ENCODE measurements at regions of chr3 and their contacts with region 1.

Region 1: GRCh38 chr3:195271116-195271858 is at the start of gene XXYLT1:
- DNase-seq: peak; percentile 68 to 72 (median 69)
- H3K4me3 ChIP-seq: peak within 1 kb of the TSS; percentile 62 to 92 (median 91)
- H3K4me3 Mint-ChIP-seq: peak within 1 kb of the TSS; percentile 84 to 93
- H3K27ac ChIP-seq: peak within 1 kb of the TSS in 1 of 2 donors; percentile 68
- H3K27ac Mint-ChIP-seq: peak within 1 kb of the TSS; percentile 50 to 90 (median 83)
- H3K4me1 ChIP-seq: peaks cover 26 to 33% of the 10 kb centered on the region in 2 donors
- H3K4me1 Mint-ChIP-seq: peaks cover 24% of the 10 kb centered on the region
- H3K27me3 ChIP-seq: no peaks in the 10 kb centered on the region
- H3K27me3 Mint-ChIP-seq: peaks cover 0 to 5% (median 0%) of the 10 kb centered on the region in 3 donors
- CTCF ChIP-seq: peak; percentile 83
- polyA plus RNA-seq, gene XXYLT1: 11.8 to 13.5 (median 13.2) TPM

Region 2: DNA sequence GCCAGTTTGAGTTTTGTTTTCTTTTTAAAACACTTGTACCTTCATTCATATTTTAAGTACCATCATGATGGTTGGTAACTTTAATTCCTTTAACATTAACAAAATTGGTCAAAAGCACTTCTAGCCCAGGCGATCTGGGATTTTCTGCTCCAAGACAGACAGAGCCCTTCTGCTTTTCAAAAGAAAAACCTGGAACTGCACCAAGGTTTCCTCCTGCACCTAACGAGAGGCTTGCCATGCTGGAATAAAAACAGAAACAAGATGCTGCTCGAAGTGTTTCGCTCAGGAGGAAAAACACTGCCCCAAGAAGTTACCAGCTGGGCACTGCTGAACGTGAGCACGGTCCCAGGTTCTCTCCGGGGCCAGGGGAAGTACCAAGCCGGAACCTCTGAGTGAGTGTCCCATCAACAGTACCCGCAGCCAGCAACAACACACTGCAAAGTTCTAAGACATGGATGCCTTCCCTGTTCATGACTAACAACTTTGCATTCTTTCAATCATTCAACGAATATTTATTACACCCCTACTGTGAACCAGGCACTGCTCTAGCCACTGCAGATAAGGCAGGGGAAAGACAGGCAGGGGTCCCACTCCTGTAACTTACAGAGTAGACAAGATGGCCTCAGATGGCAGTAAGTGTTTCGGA is 99.1 kb before region 1 on chr3:
- intact Hi-C with region 1: no loop called
- DNase-seq: peak in 2 of 3 donors; percentile 27 to 47
- H3K4me3 ChIP-seq: peak overlapping the region in 1 of 3 experiments; percentile 39
- H3K4me3 Mint-ChIP-seq: peak overlapping the region; percentile 17 to 78
- H3K27ac ChIP-seq: no peak overlapping the region
- H3K27ac Mint-ChIP-seq: peak overlapping the region in 2 of 7 donors; percentile 6 to 51
- H3K4me1 ChIP-seq: peaks cover 37 to 40% of the 10 kb centered on the region in 2 donors
- H3K4me1 Mint-ChIP-seq: peaks cover 43% of the 10 kb centered on the region
- H3K27me3 ChIP-seq: no peaks in the 10 kb centered on the region
- H3K27me3 Mint-ChIP-seq: peaks cover 0 to 2% (median 1%) of the 10 kb centered on the region in 3 donors
- CTCF ChIP-seq: no peak

Region 3: DNA sequence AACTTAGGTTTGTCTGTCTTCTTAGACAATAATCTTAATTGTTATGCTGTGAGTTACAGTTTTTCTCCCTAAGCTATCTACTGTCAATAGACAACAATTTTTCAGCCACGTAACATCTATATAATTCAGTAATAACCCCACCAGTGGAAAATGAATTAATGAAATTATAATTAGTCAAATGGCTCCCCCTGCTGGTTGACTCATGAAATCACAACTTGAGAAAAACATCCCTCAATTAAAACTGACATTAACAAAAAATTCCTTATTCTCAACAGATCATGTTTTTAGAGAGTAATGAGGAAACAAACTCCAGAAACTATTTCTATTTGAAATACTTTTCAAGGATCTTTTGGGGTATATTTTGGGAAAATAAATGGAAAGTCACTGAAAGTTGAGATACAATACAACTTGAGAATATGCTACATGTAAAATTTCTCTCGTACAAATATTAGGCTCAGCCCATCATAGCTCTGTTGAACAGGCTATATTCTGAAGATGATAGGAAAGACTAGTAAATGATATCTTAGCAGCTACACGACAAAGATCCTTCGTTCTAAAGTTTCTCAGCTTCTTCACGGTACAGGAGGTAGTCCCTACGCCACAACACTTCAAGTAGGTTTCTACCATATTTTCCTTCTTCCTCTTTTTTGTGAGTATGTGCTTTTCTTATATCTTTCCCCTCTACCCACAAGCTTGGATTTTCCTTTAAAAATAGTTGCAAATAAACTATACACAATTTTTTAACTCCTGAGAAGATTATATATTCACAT is 251.2 kb after region 1 on chr3:
- intact Hi-C with region 1: loop called (anchors 5 kb)
- DNase-seq: peak in 2 of 3 donors; percentile 32 to 60
- H3K4me3 ChIP-seq: no peak overlapping the region
- H3K4me3 Mint-ChIP-seq: no peak overlapping the region
- H3K27ac ChIP-seq: no peak overlapping the region
- H3K27ac Mint-ChIP-seq: peak overlapping the region in 2 of 7 donors; percentile 13 to 31
- H3K4me1 ChIP-seq: no peaks in the 10 kb centered on the region
- H3K4me1 Mint-ChIP-seq: peaks cover 4% of the 10 kb centered on the region
- H3K27me3 ChIP-seq: no peaks in the 10 kb centered on the region
- H3K27me3 Mint-ChIP-seq: no peaks in the 10 kb centered on the region
- CTCF ChIP-seq: peak; percentile 81

Region 4: DNA sequence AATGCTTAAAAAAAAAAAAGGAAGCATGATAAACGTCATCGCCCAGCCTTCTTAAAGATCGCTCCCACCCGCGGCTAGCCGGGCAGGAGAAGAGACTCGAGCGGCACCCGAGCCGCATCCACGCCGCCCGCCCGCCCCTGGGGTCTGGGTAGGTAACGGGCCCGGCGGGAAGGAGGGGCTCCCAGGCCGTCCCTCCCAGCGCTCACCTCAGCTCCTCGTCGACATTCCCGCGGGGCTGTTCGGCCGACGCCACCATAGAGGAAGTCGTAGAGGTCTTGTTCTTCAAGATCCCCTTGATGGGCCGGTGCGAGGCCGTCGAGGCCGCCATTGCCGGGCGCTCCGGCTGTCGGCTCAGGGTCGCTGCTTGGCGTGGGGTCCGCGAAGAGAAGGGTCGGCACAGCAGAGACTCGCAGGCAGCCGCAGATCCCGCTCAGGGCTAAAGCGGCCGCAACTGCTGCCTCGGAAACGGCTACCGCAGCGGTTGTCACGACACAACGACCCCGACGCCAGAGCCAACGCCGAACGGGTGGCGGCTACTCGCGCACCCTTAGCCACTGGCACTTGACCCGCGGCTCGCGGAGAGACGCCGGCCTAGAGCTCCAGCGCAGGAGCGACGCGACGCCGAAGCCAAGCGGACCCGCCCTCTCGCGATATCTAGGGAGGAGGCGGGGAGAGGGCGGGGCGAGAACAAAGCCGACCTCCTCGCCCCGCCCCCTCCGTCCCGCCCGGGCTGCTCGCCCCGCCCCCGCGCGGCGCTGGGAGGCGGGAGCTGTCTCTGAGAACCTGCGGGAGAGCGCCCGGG is 271.6 kb after region 1 on chr3 and contains the start of gene PPP1R2:
- intact Hi-C with region 1: loop called in 1 of 2 experiments (anchors 5 kb)
- DNase-seq: peak; percentile 87 to 89 (median 88)
- H3K4me3 ChIP-seq: peak within 1 kb of the TSS; percentile 73 to 91 (median 89)
- H3K4me3 Mint-ChIP-seq: peak within 1 kb of the TSS; percentile 89 to 94
- H3K27ac ChIP-seq: peak within 1 kb of the TSS; percentile 84 to 92
- H3K27ac Mint-ChIP-seq: peak within 1 kb of the TSS; percentile 93 to 98 (median 96)
- H3K4me1 ChIP-seq: peaks cover 30 to 42% of the 10 kb centered on the region in 2 donors
- H3K4me1 Mint-ChIP-seq: peaks cover 57% of the 10 kb centered on the region
- H3K27me3 ChIP-seq: peaks cover 8 to 16% of the 10 kb centered on the region in 2 donors
- H3K27me3 Mint-ChIP-seq: peaks cover 17 to 25% (median 24%) of the 10 kb centered on the region in 3 donors
- CTCF ChIP-seq: no peak
- polyA plus RNA-seq, gene PPP1R2: 21.0 to 121 (median 118) TPM

Measured in CD14-positive monocyte (primary cell).